Sigmoid colon (tissue), 7 donors: ENCODE measurements at regions of chr11 and their contacts with region 1.

Region 1: GRCh38 chr11:65506770-65507505 is 8.1 kb downstream of the MALAT1 start:
- DNase-seq: peak; percentile 85
- H3K4me3 ChIP-seq: peak overlapping the region; percentile 22 to 92 (median 52)
- H3K27ac ChIP-seq: peak overlapping the region; percentile 92 to 100 (median 97)
- H3K4me1 ChIP-seq: peaks cover 0 to 44% (median 36%) of the 10 kb centered on the region in 4 donors
- H3K27me3 ChIP-seq: no peaks in the 10 kb centered on the region
- CTCF ChIP-seq: no peak
- EP300 ChIP-seq: no peak
- POLR2A ChIP-seq: peak in 1 of 2 donors; percentile 27

Region 2: GRCh38 chr11:65290448-65291165 is 216.3 kb before region 1 on chr11:
- intact Hi-C with region 1: loop called (anchors 10 kb)
- DNase-seq: peak; percentile 99
- H3K4me3 ChIP-seq: no peak overlapping the region
- H3K27ac ChIP-seq: peak overlapping the region; percentile 89 to 95 (median 94)
- H3K4me1 ChIP-seq: peaks cover 0 to 72% (median 72%) of the 10 kb centered on the region in 4 donors
- H3K27me3 ChIP-seq: no peaks in the 10 kb centered on the region
- CTCF ChIP-seq: no peak
- EP300 ChIP-seq: peak in 2 of 4 donors; percentile 2 to 61
- POLR2A ChIP-seq: no peak

Region 3: GRCh38 chr11:65366340-65366773 is 140.6 kb before region 1 on chr11:
- intact Hi-C with region 1: loop called (anchors 2 kb)
- DNase-seq: no peak
- H3K4me3 ChIP-seq: no peak overlapping the region
- H3K27ac ChIP-seq: no peak overlapping the region
- H3K4me1 ChIP-seq: peaks cover 0 to 4% (median 4%) of the 10 kb centered on the region in 4 donors
- H3K27me3 ChIP-seq: no peaks in the 10 kb centered on the region
- CTCF ChIP-seq: peak; percentile 65 to 89 (median 72)
- EP300 ChIP-seq: no peak
- POLR2A ChIP-seq: no peak

Region 4: GRCh38 chr11:65382033-65382807 is 124.7 kb before region 1 on chr11 and contains the start of gene SLC25A45:
- intact Hi-C with region 1: loop called (anchors 2 kb)
- DNase-seq: peak; percentile 98
- H3K4me3 ChIP-seq: peak within 1 kb of the TSS; percentile 27 to 52 (median 46)
- H3K27ac ChIP-seq: peak within 1 kb of the TSS; percentile 95 to 99 (median 96)
- H3K4me1 ChIP-seq: peaks cover 0 to 59% (median 48%) of the 10 kb centered on the region in 4 donors
- H3K27me3 ChIP-seq: no peaks in the 10 kb centered on the region
- CTCF ChIP-seq: peak; percentile 90 to 98 (median 95)
- EP300 ChIP-seq: peak in 2 of 4 donors; percentile 45 to 68
- POLR2A ChIP-seq: peak; percentile 46 to 63
- total RNA-seq, gene SLC25A45: 2.5 to 8.9 (median 6.0) TPM

Region 5: GRCh38 chr11:65471410-65471762 is 35.6 kb before region 1 on chr11:
- intact Hi-C with region 1: loop called (anchors 2 kb)
- DNase-seq: peak; percentile 95
- H3K4me3 ChIP-seq: peak overlapping the region; percentile 18 to 37 (median 24)
- H3K27ac ChIP-seq: peak overlapping the region; percentile 92 to 100 (median 96)
- H3K4me1 ChIP-seq: peaks cover 0 to 47% (median 32%) of the 10 kb centered on the region in 4 donors
- H3K27me3 ChIP-seq: no peaks in the 10 kb centered on the region
- CTCF ChIP-seq: peak in 3 of 4 experiments; percentile 53 to 59 (median 56)
- EP300 ChIP-seq: peak in 2 of 4 donors; percentile 43 to 88
- POLR2A ChIP-seq: no peak